Posterior vena cava (tissue), 2 donors: ENCODE measurements at regions of chr10 and their contacts with region 1.

Region 1: DNA sequence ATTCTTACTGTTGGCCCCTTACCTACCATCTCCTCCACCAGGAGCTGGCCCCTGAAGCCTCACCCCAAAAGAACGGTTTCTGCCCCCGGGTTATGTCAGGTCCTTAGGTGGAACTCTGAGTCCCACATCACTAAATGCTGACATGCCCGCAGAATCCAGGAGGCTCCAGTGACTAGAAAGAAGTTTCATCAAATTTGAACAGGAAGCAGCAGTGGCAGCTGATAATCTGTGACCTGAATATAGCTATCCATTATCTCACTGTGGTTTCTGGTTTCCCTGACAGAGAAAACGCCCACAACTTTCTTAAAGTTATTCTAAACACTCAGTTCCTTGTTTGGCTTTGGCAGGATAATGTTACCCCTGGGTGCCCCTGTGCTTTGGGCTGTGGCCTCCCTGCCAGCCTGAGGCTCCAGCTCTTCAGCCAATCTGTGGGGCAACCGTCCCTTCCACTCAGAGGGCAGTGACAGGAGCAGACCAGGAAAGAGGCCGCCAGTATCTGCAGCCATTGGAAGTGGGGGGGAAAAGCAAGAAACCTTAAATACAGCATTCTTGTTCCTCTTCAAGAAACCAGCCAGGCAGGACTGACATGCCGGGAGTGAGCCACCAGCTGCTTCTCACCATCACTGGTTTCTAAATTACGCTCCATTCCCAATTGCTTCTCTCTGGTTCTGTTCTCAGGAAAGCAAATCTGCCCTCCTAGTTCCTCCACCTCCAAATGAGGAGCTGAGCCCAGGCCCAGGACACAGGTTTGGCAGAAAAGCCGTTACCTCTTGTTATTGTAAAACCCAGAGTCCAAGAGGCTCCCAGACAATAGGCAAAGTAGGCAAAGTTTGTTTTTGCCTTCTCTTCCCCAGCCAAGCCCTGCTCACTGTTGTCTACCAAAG is 41.2 kb upstream of the VCL start:
- DNase-seq: no peak

Region 2: GRCh38 chr10:73827346-73828089 is 129.2 kb before region 1 on chr10:
- intact Hi-C with region 1: no loop called
- DNase-seq: no peak

Region 3: GRCh38 chr10:73843271-73843670 is 113.4 kb before region 1 on chr10:
- intact Hi-C with region 1: loop called in 1 of 2 experiments (anchors 5 kb)
- DNase-seq: no peak